Adrenal gland (tissue), 19 donors: ENCODE measurements at regions of chr6 and their contacts with region 1.

Region 1: DNA sequence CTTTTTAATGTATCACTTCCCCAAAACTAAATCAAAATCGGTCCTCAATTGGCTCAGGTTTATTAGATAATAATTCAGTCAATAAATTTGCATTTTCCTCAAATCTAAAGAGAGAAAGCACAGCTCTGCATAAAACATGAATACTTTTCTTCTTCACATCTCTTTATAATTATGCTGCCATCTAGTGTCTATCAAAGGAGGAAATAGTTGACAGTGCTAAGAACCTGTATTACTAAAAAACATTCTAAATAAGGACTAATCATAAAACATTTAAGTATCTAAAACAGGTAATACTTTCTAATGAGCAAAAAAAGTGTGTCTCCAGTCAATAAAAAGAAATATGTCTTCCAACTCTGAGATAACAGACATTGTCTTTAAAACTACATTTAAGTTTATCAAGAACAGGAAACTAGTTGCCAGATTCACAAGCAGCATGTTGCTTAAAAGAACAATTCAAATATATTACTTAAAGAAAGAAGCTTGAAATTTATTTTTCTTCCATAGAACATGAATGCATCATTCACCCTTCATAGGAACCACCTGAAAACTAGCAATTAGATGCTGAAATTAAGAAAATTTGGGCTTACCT is 56.5 kb upstream of the DST start:
- DNase-seq: no peak
- H3K4me3 ChIP-seq: no peak overlapping the region
- H3K27ac ChIP-seq: no peak overlapping the region
- H3K4me1 ChIP-seq: peaks cover 5 to 11% of the 10 kb centered on the region in 2 donors
- H3K27me3 ChIP-seq: no peaks in the 10 kb centered on the region
- CTCF ChIP-seq: peak; percentile 38 to 71 (median 58)
- POLR2A ChIP-seq: no peak

Region 2: GRCh38 chr6:56637640-56638039 is 61.5 kb before region 1 on chr6:
- intact Hi-C with region 1: loop called in 1 of 2 experiments (anchors 5 kb)
- DNase-seq: no peak
- H3K4me3 ChIP-seq: no peak overlapping the region
- H3K27ac ChIP-seq: no peak overlapping the region
- H3K4me1 ChIP-seq: no peaks in the 10 kb centered on the region
- H3K27me3 ChIP-seq: no peaks in the 10 kb centered on the region
- CTCF ChIP-seq: peak; percentile 51 to 83 (median 71)
- POLR2A ChIP-seq: no peak

Region 3: GRCh38 chr6:56649053-56649769 is 49.9 kb before region 1 on chr6:
- intact Hi-C with region 1: loop called in 1 of 2 experiments (anchors 5 kb)
- DNase-seq: no peak
- H3K4me3 ChIP-seq: no peak overlapping the region
- H3K27ac ChIP-seq: no peak overlapping the region
- H3K4me1 ChIP-seq: peaks cover 12 to 15% of the 10 kb centered on the region in 2 donors
- H3K27me3 ChIP-seq: no peaks in the 10 kb centered on the region
- CTCF ChIP-seq: no peak
- POLR2A ChIP-seq: no peak

Region 4: DNA sequence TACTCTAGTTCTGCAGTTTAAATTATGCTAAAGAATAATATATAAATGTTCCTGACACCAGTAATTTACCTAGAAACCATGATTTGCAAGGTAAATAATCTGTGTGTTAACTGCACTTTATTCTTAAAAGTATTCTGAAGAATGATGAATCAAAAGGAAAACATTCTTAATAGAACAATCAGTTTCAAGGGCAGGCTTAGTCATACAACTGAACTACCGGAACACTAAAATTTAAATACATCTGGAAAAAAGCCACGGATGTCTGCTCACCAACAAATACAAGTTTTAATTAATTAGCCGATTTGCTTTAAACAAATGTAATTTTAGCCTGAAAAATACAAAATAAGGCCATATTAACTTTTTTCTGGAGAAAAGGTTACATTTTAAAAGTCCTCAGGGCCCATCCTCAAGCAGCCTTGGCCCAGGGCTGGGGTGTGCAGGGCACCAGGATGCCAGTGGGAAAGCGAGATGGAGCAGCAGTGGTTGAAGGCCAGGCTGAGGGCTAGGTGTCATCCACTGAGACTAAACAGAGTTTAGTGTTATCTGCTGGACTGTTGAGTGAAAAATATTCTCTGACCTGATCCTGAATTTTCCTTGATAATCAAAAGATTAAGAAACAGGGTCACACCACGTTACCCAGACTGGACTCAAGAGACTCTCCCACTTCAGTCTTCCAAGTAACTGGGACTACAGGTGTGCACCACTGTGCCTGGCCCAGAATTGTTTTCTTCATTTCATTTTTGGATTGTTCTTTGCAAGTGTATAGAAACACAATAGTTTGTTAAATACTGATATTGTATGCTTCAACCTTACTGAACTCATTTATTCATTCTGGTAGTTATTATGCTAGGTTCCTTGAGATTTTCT is 31.7 kb after region 1 on chr6:
- intact Hi-C with region 1: no loop called
- DNase-seq: peak; percentile 55 to 75 (median 73)
- H3K4me3 ChIP-seq: no peak overlapping the region
- H3K27ac ChIP-seq: peak overlapping the region in 4 of 5 donors; percentile 49 to 74 (median 57)
- H3K4me1 ChIP-seq: peaks cover 7 to 20% of the 10 kb centered on the region in 2 donors
- H3K27me3 ChIP-seq: no peaks in the 10 kb centered on the region
- CTCF ChIP-seq: no peak
- POLR2A ChIP-seq: no peak

Region 5: GRCh38 chr6:56808871-56809359 is 109.8 kb after region 1 on chr6:
- intact Hi-C with region 1: no loop called
- DNase-seq: no peak
- H3K4me3 ChIP-seq: no peak overlapping the region
- H3K27ac ChIP-seq: no peak overlapping the region
- H3K4me1 ChIP-seq: peaks cover 0 to 10% of the 10 kb centered on the region in 2 donors
- H3K27me3 ChIP-seq: no peaks in the 10 kb centered on the region
- CTCF ChIP-seq: no peak
- POLR2A ChIP-seq: no peak